ENCODE measurements at regions of chr4 and their contacts with region 1.

Region 1: DNA sequence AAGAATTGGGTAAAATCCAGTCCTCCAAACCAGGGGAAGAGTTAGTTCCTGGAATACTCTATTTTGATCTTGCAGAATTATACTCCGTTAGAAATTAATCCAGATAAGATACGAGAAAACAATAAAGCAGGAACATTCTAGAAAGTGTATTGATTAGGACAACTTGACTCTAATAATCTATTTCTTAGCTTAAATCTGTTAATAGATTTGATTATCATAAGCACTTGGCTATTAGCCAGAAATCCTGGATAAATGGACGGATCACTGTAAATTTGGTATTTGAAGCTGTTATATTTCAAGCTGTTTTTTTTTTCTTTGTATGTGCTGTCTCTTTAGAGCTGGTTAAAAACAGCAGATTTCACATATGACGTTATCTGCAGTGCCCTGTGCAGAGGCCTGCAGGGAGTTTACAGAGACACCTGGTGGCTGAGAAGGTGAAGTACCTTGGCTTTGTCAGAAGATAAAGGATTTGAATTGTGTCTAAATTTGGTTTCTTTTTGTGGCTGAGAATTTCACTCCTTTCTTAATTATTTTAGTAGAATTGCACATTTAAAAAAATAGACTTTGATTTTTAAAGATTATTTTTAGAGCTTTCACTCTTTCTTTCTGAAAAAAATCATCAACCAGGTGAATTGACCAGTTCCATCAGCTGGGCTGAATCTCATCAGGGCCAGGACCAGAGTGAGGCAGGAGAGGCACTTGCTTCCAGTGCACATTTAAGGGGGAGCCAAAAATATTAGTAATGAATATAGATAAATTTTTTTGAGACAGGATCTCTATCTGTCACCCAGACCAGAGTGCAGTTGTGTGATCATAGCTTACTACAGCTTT is 9.7 kb upstream of the CHRNA9 start:
- DNase-seq: peak; percentile 87
- H3K4me3 ChIP-seq: no peak overlapping the region
- H3K27ac ChIP-seq: no peak overlapping the region
- H3K4me1 ChIP-seq: peaks cover 20% of the 10 kb centered on the region
- H3K27me3 ChIP-seq: no peaks in the 10 kb centered on the region
- CTCF ChIP-seq: peak; percentile 90

Region 2: GRCh38 chr4:39697740-39698423 is 627.5 kb before region 1 on chr4 and contains the start of gene UBE2K:
- CTCF ChIA-PET with region 1: no interaction called
- POLR2A ChIA-PET with region 1: no interaction called
- intact Hi-C with region 1: loop called (anchors 10 kb)
- DNase-seq: peak; percentile 93
- H3K4me3 ChIP-seq: peak within 1 kb of the TSS; percentile 87
- H3K27ac ChIP-seq: peak within 1 kb of the TSS; percentile 95
- H3K4me1 ChIP-seq: peaks cover 6% of the 10 kb centered on the region
- H3K27me3 ChIP-seq: no peaks in the 10 kb centered on the region
- CTCF ChIP-seq: no peak
- total RNA-seq, gene UBE2K: 137 and 138 TPM in 2 replicates

Region 3: GRCh38 chr4:40749717-40750460 is 424.5 kb after region 1 on chr4 and contains the start of gene NSUN7:
- CTCF ChIA-PET with region 1: no interaction called
- POLR2A ChIA-PET with region 1: no interaction called
- intact Hi-C with region 1: no loop called
- DNase-seq: peak; percentile 39
- H3K4me3 ChIP-seq: peak within 1 kb of the TSS; percentile 56
- H3K27ac ChIP-seq: no peak within 1 kb of the TSS
- H3K4me1 ChIP-seq: no peaks in the 10 kb centered on the region
- H3K27me3 ChIP-seq: peaks cover 4% of the 10 kb centered on the region
- CTCF ChIP-seq: no peak
- total RNA-seq, gene NSUN7: 0.90 and 1.1 TPM in 2 replicates

Region 4: DNA sequence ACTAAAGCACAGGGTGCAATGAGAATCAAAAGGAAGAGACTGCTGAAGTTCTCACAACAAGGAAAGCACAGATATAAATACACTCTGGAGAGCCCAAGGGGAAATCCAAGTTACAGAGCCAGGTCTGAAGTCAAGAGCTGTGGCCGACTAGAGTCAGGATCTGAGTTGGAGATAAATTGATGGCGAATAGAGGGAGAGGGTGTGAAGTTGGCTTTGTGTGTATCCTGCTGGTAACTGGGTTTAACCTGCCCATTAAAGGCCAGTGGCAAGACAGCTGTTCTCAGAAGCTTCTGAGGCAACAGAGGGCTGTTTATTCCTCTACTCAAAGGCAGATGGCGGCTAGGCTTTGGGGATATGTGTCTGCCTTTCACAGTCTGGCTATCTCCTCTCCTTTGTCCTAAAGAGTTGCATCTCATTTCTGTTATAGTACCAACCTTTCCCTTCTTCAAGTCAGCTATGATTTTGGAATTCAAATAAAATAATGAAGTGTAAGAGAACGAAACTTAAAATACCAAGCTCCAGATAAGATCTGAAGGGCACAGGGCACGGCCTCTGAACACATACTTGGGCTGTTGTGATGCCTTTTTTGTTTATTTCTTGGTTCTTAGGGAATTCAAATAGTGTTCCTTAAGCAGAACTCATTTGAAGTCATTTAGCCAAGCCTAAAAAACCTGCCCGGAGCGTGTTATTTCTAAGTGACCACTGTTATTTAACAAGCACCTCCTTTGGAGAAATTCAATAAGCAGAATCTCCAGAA is 746.8 kb after region 1 on chr4:
- CTCF ChIA-PET with region 1: no interaction called
- POLR2A ChIA-PET with region 1: no interaction called
- intact Hi-C with region 1: no loop called
- DNase-seq: no peak
- H3K4me3 ChIP-seq: no peak overlapping the region
- H3K27ac ChIP-seq: no peak overlapping the region
- H3K4me1 ChIP-seq: no peaks in the 10 kb centered on the region
- H3K27me3 ChIP-seq: no peaks in the 10 kb centered on the region
- CTCF ChIP-seq: no peak

Measured in A673 (cell line).